ENCODE measurements at regions of chr10 and their contacts with region 1.

Region 1: GRCh38 chr10:133124357-133125211 is 35.4 kb upstream of the KNDC1 start:
- DNase-seq: peak; percentile 8
- H3K4me3 ChIP-seq: no peak overlapping the region
- H3K27ac ChIP-seq: no peak overlapping the region
- H3K4me1 ChIP-seq: no peaks in the 10 kb centered on the region
- H3K27me3 ChIP-seq: peaks cover 25% of the 10 kb centered on the region
- CTCF ChIP-seq: peak; percentile 36 to 64 (median 40)
- EP300 ChIP-seq: no peak
- POLR2A ChIP-seq: no peak

Region 2: GRCh38 chr10:132836832-132837540 is 287.6 kb before region 1 on chr10:
- in situ Hi-C with region 1: no loop called
- intact Hi-C with region 1: loop called (anchors 5 kb)
- DNase-seq: no peak
- H3K4me3 ChIP-seq: no peak overlapping the region
- H3K27ac ChIP-seq: no peak overlapping the region
- H3K4me1 ChIP-seq: no peaks in the 10 kb centered on the region
- H3K27me3 ChIP-seq: peaks cover 57% of the 10 kb centered on the region
- CTCF ChIP-seq: peak; percentile 83 to 96 (median 94)
- EP300 ChIP-seq: no peak
- POLR2A ChIP-seq: no peak

Region 3: GRCh38 chr10:132939957-132940790 is 184.4 kb before region 1 on chr10:
- in situ Hi-C with region 1: loop called in 2 of 4 experiments (anchors 25 kb)
- intact Hi-C with region 1: no loop called
- DNase-seq: peak; percentile 35
- H3K4me3 ChIP-seq: no peak overlapping the region
- H3K27ac ChIP-seq: no peak overlapping the region
- H3K4me1 ChIP-seq: peaks cover 4 to 12% (median 9%) of the 10 kb centered on the region in 4 donors
- H3K27me3 ChIP-seq: peaks cover 56% of the 10 kb centered on the region
- CTCF ChIP-seq: peak; percentile 49 to 75 (median 70)
- EP300 ChIP-seq: no peak
- POLR2A ChIP-seq: no peak

Region 4: DNA sequence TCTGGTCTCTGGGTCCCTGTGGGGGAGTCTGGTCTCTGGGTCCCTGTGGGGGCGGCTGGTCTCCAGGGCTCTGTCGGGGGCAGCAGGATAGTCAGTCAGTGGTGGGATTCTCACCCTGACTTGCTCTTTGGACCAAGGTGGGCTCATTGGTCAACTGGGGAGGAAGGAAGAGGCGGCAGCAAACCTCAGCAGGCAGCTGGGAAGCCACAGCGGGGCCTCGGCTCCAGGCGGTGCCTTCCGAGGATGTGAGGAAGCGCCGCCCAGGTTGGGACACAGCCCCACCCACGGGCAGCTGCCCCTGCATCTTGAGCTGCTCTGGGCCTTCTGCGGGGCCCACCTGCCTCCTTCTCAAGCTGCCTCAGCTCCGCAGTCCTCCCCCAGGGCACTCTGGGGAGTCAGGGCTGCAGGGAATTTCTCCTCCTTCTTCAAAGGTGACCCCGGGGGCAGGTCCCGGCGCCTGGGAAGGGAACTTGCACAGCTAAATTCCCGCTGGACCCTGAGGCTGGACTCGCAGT is 15.0 kb after region 1 on chr10:
- in situ Hi-C with region 1: no loop called
- intact Hi-C with region 1: no loop called
- DNase-seq: no peak
- H3K4me3 ChIP-seq: no peak overlapping the region
- H3K27ac ChIP-seq: no peak overlapping the region
- H3K4me1 ChIP-seq: peaks cover 0 to 5% (median 2%) of the 10 kb centered on the region in 4 donors
- H3K27me3 ChIP-seq: peaks cover 40% of the 10 kb centered on the region
- CTCF ChIP-seq: no peak
- EP300 ChIP-seq: no peak
- POLR2A ChIP-seq: no peak